ENCODE measurements at regions of chr10 and their contacts with region 1.

Region 1: GRCh38 chr10:79123547-79123963 is 54.8 kb downstream of the ZMIZ1 start:
- DNase-seq: peak in 1 of 2 donors; percentile 74
- ATAC-seq: peak; percentile 80 to 90 (median 88)
- H3K4me3 ChIP-seq: no peak overlapping the region
- H3K27ac ChIP-seq: peak overlapping the region; percentile 71
- H3K4me1 ChIP-seq: peaks cover 47% of the 10 kb centered on the region
- H3K27me3 ChIP-seq: no peaks in the 10 kb centered on the region
- CTCF ChIP-seq: no peak

Region 2: DNA sequence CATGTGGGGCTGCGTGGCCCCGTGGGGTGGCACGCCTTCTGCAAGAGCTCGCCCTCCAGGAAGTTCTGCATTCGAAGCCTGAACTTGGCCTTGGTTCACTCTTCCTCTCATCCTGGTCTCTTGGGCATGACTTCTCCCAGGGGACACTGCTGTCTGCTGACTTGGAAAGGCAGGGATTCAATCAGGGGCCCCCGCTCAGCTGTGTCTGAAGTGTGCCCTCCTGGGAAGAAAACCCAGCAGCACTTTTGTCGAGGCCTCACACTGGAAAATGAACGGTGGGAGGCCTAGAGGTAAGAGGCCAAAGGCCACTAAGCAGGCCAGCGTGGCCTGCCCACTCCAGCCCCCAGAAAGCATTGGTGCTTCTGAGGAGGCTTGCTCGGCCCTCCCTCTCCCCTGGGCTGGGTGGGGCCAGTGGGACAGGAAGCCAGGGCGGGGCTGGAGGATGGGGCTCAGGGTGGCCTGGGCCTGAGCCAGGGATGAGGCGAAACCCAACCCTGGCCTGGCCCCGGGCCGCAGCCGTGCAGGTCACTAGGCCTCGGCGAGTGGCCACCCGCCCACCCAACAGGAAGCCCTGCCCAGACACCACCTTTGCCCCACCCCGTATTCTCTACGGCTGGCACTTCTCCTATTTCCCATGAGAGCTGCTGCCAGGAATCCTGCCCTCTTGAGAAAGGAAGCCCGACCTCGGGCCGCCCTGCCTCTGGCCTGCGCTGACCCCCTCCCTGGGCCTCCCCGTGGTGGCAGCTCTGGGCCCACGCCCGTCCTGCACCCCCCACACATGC is 26.3 kb after region 1 on chr10:
- intact Hi-C with region 1: loop called in 1 of 2 experiments (anchors 1 kb)
- DNase-seq: peak; percentile 92 to 96
- ATAC-seq: peak; percentile 66 to 73 (median 71)
- H3K4me3 ChIP-seq: peak overlapping the region; percentile 28
- H3K27ac ChIP-seq: peak overlapping the region; percentile 75
- H3K4me1 ChIP-seq: peaks cover 94% of the 10 kb centered on the region
- H3K27me3 ChIP-seq: no peaks in the 10 kb centered on the region
- CTCF ChIP-seq: no peak